Activated CD4-positive, alpha-beta T cell treated with anti-CD3 and anti-CD28 coated beads, Interleukin-2, amount 10 ng/mL, durations not matched to agents 24 days and 14 days (primary cell): ENCODE measurements at regions of chr12 and their contacts with region 1.

Region 1: GRCh38 chr12:42372154-42372791 is 46.3 kb downstream of the PPHLN1 start:
- DNase-seq: peak; percentile 80
- H3K4me3 Mint-ChIP-seq: no peak overlapping the region
- H3K27ac Mint-ChIP-seq: no peak overlapping the region
- H3K4me1 Mint-ChIP-seq: peaks cover 2% of the 10 kb centered on the region
- H3K27me3 Mint-ChIP-seq: no peaks in the 10 kb centered on the region

Region 2: GRCh38 chr12:41277116-41277945 is 1094.9 kb before region 1 on chr12:
- intact Hi-C with region 1: loop called (anchors 10 kb)
- DNase-seq: peak; percentile 58
- H3K4me3 Mint-ChIP-seq: no peak overlapping the region
- H3K27ac Mint-ChIP-seq: no peak overlapping the region
- H3K4me1 Mint-ChIP-seq: no peaks in the 10 kb centered on the region
- H3K27me3 Mint-ChIP-seq: no peaks in the 10 kb centered on the region

Region 3: DNA sequence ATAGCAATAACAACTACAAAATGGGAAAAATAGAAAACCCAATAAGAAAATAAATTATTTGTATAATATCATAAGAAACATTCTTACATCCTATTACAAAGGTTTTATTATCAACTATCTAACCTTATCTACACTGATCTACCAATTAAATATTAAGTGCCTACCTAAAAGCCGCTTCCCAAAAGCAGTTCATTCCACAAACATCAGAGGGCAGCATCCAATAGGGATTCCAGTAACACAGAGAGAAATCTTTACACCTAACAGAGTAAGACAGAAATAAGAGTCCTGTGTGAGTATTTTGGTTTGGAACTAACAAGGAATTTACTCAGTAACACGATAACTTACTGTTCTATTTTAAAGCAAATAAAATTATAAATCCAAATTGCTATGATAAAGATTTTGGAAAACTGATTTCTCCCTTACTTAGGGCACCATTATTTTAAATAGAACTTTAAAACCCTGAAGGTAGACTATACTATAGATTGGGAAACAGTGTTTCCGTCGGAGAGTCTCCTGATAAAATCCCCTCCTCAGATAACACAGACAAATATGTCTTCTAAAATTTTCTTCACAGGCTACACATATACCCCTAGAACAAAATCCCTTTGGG is 242.6 kb before region 1 on chr12:
- intact Hi-C with region 1: loop called (anchors 5 kb)
- DNase-seq: peak; percentile 62
- H3K4me3 Mint-ChIP-seq: no peak overlapping the region
- H3K27ac Mint-ChIP-seq: no peak overlapping the region
- H3K4me1 Mint-ChIP-seq: peaks cover 13% of the 10 kb centered on the region
- H3K27me3 Mint-ChIP-seq: no peaks in the 10 kb centered on the region

Region 4: DNA sequence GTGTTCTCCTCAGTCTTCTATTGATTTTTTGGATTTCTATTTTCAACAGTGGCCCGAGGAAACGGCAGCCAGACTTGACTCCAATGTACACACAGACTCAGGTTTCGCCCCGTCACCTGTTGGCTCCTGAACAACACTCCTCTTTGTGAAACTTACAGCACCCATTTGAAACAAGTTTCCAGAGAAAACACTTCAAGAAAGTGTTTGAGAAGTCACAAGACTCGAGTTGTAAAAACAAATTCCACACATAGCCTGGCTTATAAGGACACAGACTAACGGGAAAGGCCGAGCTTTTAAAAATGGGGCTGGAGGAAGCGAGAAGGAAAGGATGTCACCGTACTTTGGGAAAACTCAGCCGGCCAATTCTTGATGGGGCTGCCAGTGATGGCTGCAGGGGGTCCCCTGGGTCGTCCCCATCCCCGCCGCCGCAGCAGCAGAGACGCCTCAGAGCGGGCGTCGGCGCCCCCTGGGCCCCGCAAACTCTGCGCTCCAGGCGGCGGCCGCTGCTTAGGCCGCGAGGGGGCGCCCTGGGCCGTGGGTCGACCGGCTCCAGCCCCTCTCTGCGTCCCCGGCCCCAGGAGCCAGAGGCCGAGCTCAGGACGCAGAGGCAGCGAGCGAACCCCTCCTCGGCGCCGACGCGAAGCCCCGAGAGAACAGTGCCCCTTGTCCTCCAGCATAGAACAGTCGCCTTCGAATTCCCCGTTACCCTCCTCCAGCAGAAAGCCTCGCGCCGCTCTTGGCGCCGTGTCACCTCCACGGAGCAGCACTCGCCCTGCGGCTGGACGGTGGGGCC is 110.4 kb after region 1 on chr12:
- intact Hi-C with region 1: no loop called
- DNase-seq: peak; percentile 87
- H3K4me3 Mint-ChIP-seq: peak overlapping the region; percentile 81
- H3K27ac Mint-ChIP-seq: no peak overlapping the region
- H3K4me1 Mint-ChIP-seq: peaks cover 8% of the 10 kb centered on the region
- H3K27me3 Mint-ChIP-seq: peaks cover 76% of the 10 kb centered on the region

Region 5: GRCh38 chr12:42524716-42525115 is 152.4 kb after region 1 on chr12:
- intact Hi-C with region 1: no loop called
- DNase-seq: no peak
- H3K4me3 Mint-ChIP-seq: no peak overlapping the region
- H3K27ac Mint-ChIP-seq: no peak overlapping the region
- H3K4me1 Mint-ChIP-seq: no peaks in the 10 kb centered on the region
- H3K27me3 Mint-ChIP-seq: peaks cover 3% of the 10 kb centered on the region